Right ventricle myocardium superior (tissue), 1 donor: ENCODE measurements at regions of chr6 and their contacts with region 1.

Region 1: DNA sequence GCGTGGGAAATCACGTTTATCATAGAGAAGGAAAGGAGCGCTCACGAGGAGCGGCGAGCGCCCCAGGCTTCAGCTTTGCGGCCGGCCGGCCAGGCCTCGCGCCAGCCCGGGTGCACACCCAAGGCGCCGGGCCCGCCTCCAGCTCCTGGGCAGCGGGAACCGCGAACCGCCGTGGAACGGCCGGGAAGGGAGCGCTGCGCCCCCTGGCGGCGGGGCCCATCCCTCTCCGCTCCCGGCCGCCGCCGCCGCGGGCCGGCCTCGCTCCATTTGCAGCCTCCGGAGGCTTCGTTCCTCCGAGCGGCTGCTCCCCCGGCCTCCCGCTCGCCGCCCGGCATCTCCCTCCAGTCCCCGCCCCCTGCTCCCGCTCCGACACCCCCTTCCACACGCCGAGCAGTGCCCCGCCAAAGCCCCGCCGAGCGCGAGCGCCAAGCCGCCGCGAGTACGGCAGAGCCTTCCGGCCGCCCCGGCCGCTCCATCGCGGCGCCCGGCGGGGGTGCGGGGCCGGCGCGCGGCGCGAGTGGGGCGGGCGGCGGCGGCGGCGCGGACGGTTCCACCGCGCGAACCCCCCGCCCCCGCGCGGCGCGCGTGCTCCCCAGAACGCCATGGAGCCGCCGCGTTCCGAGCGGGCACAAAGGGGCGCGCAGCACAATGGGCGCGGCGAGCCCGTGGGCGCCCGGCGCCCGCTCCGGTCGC is 956 bp downstream of the BEND3 start:
- DNase-seq: peak; percentile 93
- ATAC-seq: peak; percentile 98

Region 2: GRCh38 chr6:106799008-106799894 is 315.1 kb before region 1 on chr6:
- intact Hi-C with region 1: no loop called
- DNase-seq: no peak
- ATAC-seq: no peak

Region 3: DNA sequence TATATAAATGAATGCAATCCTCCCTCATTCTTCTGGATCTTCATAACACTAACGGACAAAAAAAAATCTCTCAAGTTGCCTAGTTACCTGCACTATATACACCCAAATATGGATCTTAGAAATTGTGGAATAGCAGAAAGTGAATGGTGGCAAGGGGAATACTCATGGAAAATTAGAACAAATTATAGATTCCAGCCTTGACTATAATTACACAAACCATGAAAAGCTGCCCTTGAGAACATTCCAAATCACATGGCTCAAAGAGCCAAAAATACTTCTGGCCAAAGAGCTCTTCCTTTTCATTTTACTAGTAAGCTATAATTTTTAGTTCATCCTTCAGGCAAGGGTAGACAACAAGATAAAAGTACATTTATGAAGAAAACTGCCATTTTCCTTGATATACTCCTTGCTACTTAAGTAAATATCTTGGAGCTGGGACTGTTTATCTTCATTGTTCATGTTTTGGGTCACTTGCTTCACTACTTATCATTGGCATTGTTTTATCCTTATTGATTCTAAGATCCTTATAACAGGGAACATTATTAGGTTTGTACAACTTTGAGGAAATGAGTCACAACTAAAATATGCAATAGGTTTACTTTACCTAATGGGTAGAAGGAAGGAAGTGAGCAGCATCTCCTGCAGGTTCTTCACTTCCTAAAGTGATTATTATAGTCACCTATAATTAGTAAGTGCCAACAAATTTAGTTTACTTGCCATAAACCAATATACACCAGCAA is 92.7 kb before region 1 on chr6:
- intact Hi-C with region 1: loop called (anchors 10 kb)
- DNase-seq: no peak
- ATAC-seq: no peak